Cardiac septum (tissue), 1 donor: ENCODE measurements at regions of chr7 and their contacts with region 1.

Region 1: DNA sequence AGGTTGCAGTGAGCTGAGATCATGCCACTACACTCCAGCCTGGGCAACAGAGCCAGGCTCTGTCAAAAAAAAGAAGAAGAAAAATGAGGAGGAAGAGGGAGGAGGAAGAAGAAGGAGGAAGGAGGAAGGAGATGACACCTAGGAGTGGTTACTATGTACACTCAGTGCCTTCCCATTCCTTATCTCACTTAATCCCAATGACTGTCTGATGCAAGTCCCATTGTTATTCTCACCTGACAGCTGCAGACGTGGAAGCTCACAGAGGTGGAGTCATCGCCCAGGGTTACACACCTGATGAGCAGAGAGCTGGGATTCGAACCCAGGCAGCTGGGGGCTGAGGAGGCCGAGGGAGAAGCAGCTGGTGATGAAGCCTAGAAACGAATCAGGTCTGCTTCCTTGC is 258.8 kb downstream of the SNX10 start:
- DNase-seq: no peak

Region 2: GRCh38 chr7:26500749-26501352 is 49.6 kb before region 1 on chr7:
- intact Hi-C with region 1: loop called (anchors 5 kb)
- DNase-seq: no peak

Region 3: GRCh38 chr7:26653430-26653911 is 103.0 kb after region 1 on chr7:
- intact Hi-C with region 1: no loop called
- DNase-seq: no peak